ENCODE measurements at regions of chr9 and their contacts with region 1.

Region 1: DNA sequence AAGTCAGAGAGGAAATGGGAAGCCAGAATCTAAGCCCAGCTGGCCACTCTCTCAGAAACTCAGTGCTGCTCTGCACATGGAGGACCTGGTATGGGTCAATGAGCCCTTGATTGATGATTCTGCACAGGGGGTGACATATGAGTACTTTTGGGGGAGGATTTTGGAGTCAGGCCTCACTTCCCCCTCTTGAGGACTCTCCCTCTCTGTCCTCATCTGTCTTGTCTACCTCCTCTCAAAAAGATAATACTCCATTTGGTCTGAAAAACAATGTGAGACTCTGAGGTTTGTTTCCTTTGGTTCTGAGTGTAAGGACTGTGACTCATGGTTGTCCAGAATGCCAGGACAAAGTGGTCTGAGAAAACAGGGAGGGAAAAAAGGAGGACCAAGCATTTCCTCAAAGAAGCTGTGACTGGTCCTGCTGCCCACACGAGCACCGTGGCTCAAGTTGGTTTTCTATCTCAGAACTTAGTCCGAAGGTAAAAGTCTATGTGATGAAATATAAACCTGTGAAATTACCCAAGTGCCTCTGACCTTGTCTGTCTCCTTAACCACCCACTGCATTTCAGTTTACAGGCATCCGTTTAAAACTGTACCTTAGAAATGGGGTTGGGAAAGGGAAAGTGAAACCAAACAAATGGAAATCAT is 11.1 kb downstream of the TTC39B start:
- DNase-seq: no peak
- ATAC-seq: peak; percentile 36

Region 2: GRCh38 chr9:15262581-15262980 is 33.3 kb before region 1 on chr9:
- intact Hi-C with region 1: no loop called
- DNase-seq: no peak
- ATAC-seq: no peak

Region 3: GRCh38 chr9:15552636-15553527 is 257.0 kb after region 1 on chr9 and contains the start of gene CCDC171:
- intact Hi-C with region 1: loop called (anchors 5 kb)
- DNase-seq: peak; percentile 95
- ATAC-seq: peak; percentile 98
- total RNA-seq, gene CCDC171: 1.6 TPM

Measured in Right ventricle myocardium inferior (tissue), 1 donor.